Heart right ventricle (tissue), 16 donors: ENCODE measurements at regions of chr2 and their contacts with region 1.

Region 1: DNA sequence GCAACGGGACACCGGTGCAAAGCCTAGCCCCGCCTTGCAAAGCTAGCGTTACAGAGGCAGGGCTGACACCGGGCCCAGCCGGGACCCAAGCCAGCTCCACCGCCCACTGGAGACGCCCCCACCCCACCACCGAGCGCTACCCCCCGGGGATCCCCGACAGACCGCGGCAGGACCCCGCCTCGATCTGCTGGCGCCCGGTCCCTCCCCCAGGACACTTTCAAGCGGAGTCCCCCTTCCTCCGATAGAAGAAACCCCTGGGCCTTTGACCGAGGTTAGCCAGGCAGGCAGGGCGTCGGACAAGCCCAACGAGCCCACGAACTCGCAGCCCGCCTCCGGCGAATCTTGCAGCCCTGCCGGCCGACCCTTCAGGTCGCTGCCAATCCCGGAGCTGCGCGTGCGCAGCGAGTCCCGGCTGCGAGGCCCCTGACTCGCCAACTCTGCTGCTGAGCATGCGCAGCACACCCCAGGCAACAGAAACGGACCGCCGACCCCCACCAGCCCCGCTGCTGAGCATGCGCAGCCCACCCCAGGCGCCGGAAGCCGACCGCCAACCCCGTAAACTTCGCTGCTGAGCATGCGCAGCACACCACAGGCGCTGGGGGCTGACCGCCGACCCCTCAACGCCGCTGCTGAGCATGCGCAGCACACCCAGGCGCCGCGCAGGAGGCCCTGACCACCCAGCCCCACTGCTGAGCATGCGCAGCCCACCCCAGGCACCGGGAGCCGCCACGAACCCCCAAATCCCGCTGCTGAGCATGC is 656 bp downstream of the ADI1 start:
- DNase-seq: peak; percentile 98 to 100
- ATAC-seq: peak; percentile 95 to 98 (median 96)
- H3K4me3 ChIP-seq: peak overlapping the region; percentile 64 to 99 (median 86)
- H3K27ac ChIP-seq: peak overlapping the region; percentile 96 to 100 (median 98)
- H3K4me1 ChIP-seq: peaks cover 5 to 55% (median 42%) of the 10 kb centered on the region in 9 donors
- H3K27me3 ChIP-seq: no peaks in the 10 kb centered on the region
- CTCF ChIP-seq: no peak

Region 2: GRCh38 chr2:3470166-3470651 is 48.5 kb before region 1 on chr2:
- intact Hi-C with region 1: loop called in 2 of 10 experiments (anchors 5 kb)
- DNase-seq: peak; percentile 79 to 88
- ATAC-seq: peak; percentile 52 to 89 (median 78)
- H3K4me3 ChIP-seq: no peak overlapping the region
- H3K27ac ChIP-seq: peak overlapping the region; percentile 70 to 87 (median 77)
- H3K4me1 ChIP-seq: peaks cover 14 to 61% (median 55%) of the 10 kb centered on the region in 9 donors
- H3K27me3 ChIP-seq: no peaks in the 10 kb centered on the region
- CTCF ChIP-seq: no peak

Region 3: GRCh38 chr2:3483227-3483985 is 35.3 kb before region 1 on chr2:
- intact Hi-C with region 1: loop called in 1 of 10 experiments (anchors 2 kb)
- DNase-seq: peak; percentile 66 to 86
- ATAC-seq: peak; percentile 77 to 96 (median 90)
- H3K4me3 ChIP-seq: peak overlapping the region in 3 of 10 donors; percentile 14 to 33 (median 24)
- H3K27ac ChIP-seq: peak overlapping the region in 1 of 10 donors; percentile 52
- H3K4me1 ChIP-seq: peaks cover 0 to 13% (median 10%) of the 10 kb centered on the region in 9 donors
- H3K27me3 ChIP-seq: no peaks in the 10 kb centered on the region
- CTCF ChIP-seq: no peak